AG04449 (cell line): ENCODE measurements at regions of chr3 and their contacts with region 1.

Region 1: GRCh38 chr3:50298836-50299637 is at the starts of genes HYAL3 and NAA80:
- DNase-seq: peak; percentile 97
- H3K4me3 ChIP-seq: peak within 1 kb of the TSS; percentile 96
- CTCF ChIP-seq: peak; percentile 44

Region 2: DNA sequence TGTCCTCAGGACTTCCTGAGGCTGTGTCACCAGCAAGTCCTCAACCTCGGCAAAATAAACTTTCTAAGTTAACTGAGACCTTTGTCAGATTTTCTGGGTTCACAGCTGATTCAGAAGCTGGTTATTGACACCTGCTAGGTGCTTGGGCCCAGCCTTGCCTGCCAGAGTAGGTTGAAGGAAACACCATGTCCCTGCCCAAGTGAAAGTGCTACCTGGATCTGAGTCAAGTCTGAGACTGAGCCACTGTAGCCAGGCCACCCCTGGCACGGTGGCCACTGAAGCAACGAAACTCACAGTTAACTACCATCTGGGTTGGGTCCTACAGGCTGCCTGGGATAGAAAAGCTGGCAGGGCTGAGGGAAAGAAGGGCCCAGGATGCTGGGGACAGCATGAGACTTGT is 15.3 kb after region 1 on chr3:
- CTCF ChIA-PET with region 1: interaction called, 12 read pairs
- POLR2A ChIA-PET with region 1: interaction called, 6 read pairs
- DNase-seq: no peak
- H3K4me3 ChIP-seq: no peak overlapping the region
- CTCF ChIP-seq: no peak